GM10248 (cell line): ENCODE measurements at regions of chr4 and their contacts with region 1.

Region 1: GRCh38 chr4:95165926-95166524 is 382.7 kb downstream of the UNC5C start:
- DNase-seq: peak; percentile 35
- CTCF ChIP-seq: peak; percentile 70

Region 2: DNA sequence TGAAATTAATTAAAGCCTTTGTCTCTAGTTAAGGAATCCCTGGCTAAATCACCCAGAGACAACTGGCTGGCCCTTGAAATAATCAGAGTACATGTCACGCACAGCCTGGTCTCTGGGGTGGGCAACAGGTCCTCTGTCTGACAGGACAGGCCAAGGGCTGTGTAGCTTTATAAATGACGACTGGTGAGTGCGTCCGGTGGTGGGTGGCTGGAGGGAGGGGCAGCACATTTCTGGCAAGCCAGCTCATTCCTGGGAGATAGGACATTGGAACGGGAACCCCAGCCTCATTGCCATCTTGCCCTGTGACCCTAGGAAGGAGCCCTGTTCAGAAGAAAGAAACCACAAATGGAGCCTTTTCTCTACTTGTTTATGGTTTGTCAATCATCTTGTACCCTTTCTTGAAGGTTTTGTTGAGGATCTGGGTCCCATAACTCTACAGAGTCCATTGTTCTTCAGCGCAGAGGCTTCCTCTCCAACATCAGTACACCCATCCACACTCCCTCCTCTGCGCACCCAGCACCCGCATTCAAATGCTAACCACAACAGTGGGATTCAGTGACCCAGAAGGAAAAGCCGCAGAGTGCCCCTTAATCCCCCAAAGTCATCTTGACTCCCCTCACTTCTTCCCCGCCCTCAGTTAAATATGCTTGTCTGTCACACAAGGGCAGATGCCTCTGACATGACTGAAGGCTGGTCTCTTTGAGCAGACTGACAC is 14.7 kb after region 1 on chr4:
- CTCF ChIA-PET with region 1: interaction called, 12 read pairs
- POLR2A ChIA-PET with region 1: no interaction called
- DNase-seq: no peak
- CTCF ChIP-seq: no peak